Endothelial cell of umbilical vein (primary cell): ENCODE measurements at regions of chr15 and their contacts with region 1.

Region 1: DNA sequence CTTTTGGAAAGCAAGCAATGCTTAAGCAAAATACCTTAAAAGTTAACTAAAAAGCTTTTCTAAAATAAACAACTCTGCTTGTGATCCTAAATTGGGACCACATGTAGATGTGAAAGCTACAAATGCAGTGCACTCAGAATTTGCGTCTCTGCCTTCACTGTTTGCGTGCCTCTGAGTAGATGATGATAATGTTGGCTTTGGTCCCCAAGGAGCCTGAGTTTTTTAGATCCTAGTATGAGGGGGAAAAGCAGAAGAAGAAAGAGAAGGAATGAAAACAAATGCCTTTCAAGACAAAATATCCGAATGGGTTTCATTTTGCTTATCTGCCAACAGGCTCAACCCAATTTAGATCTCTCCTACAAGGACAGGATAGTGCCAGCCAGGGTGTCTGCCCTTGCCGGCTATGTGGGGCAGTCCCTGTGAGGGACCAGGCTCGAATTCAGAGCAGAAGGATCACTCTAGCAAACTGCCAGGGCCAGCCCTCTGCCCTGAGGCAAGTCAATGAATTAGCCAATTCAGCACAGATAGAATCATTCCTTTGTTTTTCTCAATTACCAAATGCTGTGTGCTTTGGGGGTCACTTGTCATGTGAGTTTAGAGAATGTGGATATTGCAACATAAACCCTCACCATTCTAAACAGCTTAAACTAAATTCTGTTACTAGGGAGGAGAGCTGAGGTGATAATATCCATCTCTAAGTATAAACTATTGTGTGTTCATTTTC is 28.5 kb downstream of the SCG5 start:
- DNase-seq: no peak
- H3K4me3 ChIP-seq: no peak overlapping the region
- H3K27ac ChIP-seq: no peak overlapping the region
- H3K4me1 ChIP-seq: no peaks in the 10 kb centered on the region
- H3K27me3 ChIP-seq: no peaks in the 10 kb centered on the region
- CTCF ChIP-seq: no peak
- POLR2A ChIP-seq: no peak

Region 2: GRCh38 chr15:32683906-32684584 is 14.0 kb after region 1 on chr15:
- CTCF ChIA-PET with region 1: interaction called, 11 read pairs
- POLR2A ChIA-PET with region 1: interaction called, 4 read pairs
- dilution Hi-C with region 1: no loop called
- intact Hi-C with region 1: no loop called
- DNase-seq: peak; percentile 9
- H3K4me3 ChIP-seq: no peak overlapping the region
- H3K27ac ChIP-seq: no peak overlapping the region
- H3K4me1 ChIP-seq: peaks cover 2% of the 10 kb centered on the region
- H3K27me3 ChIP-seq: no peaks in the 10 kb centered on the region
- CTCF ChIP-seq: no peak
- POLR2A ChIP-seq: no peak

Region 3: GRCh38 chr15:32730677-32731654 is 60.9 kb after region 1 on chr15:
- CTCF ChIA-PET with region 1: no interaction called
- POLR2A ChIA-PET with region 1: no interaction called
- dilution Hi-C with region 1: no loop called
- intact Hi-C with region 1: loop called (anchors 10 kb)
- DNase-seq: peak; percentile 5
- H3K4me3 ChIP-seq: no peak overlapping the region
- H3K27ac ChIP-seq: no peak overlapping the region
- H3K4me1 ChIP-seq: no peaks in the 10 kb centered on the region
- H3K27me3 ChIP-seq: peaks cover 16 to 23% of the 10 kb centered on the region in 2 experiments
- CTCF ChIP-seq: no peak
- POLR2A ChIP-seq: no peak

Region 4: DNA sequence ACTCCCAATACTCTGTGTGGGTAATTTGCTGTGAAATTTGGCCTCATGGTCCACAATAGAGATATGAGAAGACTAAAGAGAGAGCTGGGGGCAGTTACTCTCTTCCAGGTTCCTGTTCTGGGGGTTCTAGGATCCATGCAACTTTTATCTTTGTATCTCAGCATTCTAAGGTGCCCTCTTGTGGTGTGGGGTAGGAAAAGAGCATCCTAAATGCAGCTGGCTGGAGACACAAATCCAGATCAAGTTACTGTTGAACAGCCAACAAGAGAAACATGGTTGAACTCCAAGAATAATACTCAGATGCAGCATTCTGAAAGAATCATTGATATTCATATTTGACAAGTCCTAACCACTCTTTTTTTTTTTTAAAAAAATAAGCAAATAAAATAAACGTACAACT is 285.9 kb after region 1 on chr15:
- CTCF ChIA-PET with region 1: interaction called, 10 read pairs
- POLR2A ChIA-PET with region 1: no interaction called
- dilution Hi-C with region 1: no loop called
- intact Hi-C with region 1: no loop called
- DNase-seq: peak; percentile 51
- H3K4me3 ChIP-seq: no peak overlapping the region
- H3K27ac ChIP-seq: no peak overlapping the region
- H3K4me1 ChIP-seq: no peaks in the 10 kb centered on the region
- H3K27me3 ChIP-seq: peaks cover 3 to 6% of the 10 kb centered on the region in 2 experiments
- CTCF ChIP-seq: peak; percentile 43 to 46
- POLR2A ChIP-seq: no peak